Naive thymus-derived CD4-positive, alpha-beta T cell (primary cell): ENCODE measurements at regions of chr9 and their contacts with region 1.

Region 1: GRCh38 chr9:31776471-31776870 is 608.0 kb upstream of the ACO1 start:
- DNase-seq: no peak
- ATAC-seq: no peak
- H3K4me3 ChIP-seq: no peak overlapping the region
- H3K4me3 Mint-ChIP-seq: no peak overlapping the region
- H3K27ac ChIP-seq: no peak overlapping the region
- H3K27ac Mint-ChIP-seq: no peak overlapping the region
- H3K4me1 ChIP-seq: no peaks in the 10 kb centered on the region
- H3K4me1 Mint-ChIP-seq: peaks cover 0 to 4% (median 0%) of the 10 kb centered on the region in 7 donors
- H3K27me3 ChIP-seq: no peaks in the 10 kb centered on the region
- H3K27me3 Mint-ChIP-seq: peaks cover 0 to 12% (median 4%) of the 10 kb centered on the region in 5 donors

Region 2: GRCh38 chr9:31573561-31573960 is 202.9 kb before region 1 on chr9:
- CTCF ChIA-PET with region 1: no interaction called
- POLR2A ChIA-PET with region 1: no interaction called
- intact Hi-C with region 1: no loop called
- DNase-seq: no peak
- ATAC-seq: no peak
- H3K4me3 ChIP-seq: no peak overlapping the region
- H3K4me3 Mint-ChIP-seq: no peak overlapping the region
- H3K27ac ChIP-seq: no peak overlapping the region
- H3K27ac Mint-ChIP-seq: no peak overlapping the region
- H3K4me1 ChIP-seq: no peaks in the 10 kb centered on the region
- H3K4me1 Mint-ChIP-seq: peaks cover 0 to 7% (median 0%) of the 10 kb centered on the region in 7 donors
- H3K27me3 ChIP-seq: no peaks in the 10 kb centered on the region
- H3K27me3 Mint-ChIP-seq: no peaks in the 10 kb centered on the region

Region 3: DNA sequence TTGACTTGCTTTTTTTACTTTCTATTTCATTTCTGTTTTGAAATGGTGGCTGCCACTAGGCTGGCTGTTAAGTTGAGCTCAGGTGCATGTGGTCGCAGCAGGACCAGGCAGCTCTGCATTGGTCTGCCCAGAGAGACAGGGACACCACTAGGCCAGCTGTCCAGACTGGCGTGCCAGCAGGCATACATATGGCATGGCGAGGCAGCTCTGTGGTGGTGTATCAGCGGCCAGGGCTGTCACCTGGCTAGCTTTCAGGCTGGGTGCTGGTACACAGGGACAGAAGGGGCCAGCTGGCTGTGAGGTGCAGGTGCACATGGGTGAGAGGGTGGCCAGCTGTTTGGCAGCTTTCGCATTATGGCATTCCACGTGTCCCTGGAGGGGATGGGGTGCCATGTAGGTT is 46.1 kb before region 1 on chr9:
- CTCF ChIA-PET with region 1: no interaction called
- POLR2A ChIA-PET with region 1: no interaction called
- intact Hi-C with region 1: loop called in 1 of 2 experiments (anchors 5 kb)
- DNase-seq: no peak
- ATAC-seq: no peak
- H3K4me3 ChIP-seq: no peak overlapping the region
- H3K4me3 Mint-ChIP-seq: no peak overlapping the region
- H3K27ac ChIP-seq: no peak overlapping the region
- H3K27ac Mint-ChIP-seq: no peak overlapping the region
- H3K4me1 ChIP-seq: no peaks in the 10 kb centered on the region
- H3K4me1 Mint-ChIP-seq: no peaks in the 10 kb centered on the region
- H3K27me3 ChIP-seq: no peaks in the 10 kb centered on the region
- H3K27me3 Mint-ChIP-seq: no peaks in the 10 kb centered on the region

Region 4: DNA sequence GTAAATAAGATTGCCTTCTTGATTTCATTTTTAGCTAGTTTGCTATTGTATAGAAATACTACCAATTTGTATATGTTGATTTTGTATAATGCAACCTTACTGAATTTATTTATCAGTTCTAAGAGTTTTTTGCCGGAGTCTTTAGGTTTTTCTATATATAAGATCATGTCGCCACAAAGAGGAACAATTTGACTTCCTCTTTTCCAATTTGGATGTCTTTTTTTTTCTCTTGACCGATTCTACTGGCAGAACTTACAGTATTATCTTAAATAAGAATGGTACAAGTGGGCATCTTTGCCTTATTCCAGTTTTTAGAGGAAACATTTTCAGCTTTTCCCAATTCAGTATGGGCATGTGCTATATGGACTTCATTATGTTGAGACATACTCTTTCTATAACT is 16.8 kb before region 1 on chr9:
- CTCF ChIA-PET with region 1: no interaction called
- POLR2A ChIA-PET with region 1: no interaction called
- intact Hi-C with region 1: no loop called
- DNase-seq: no peak
- ATAC-seq: no peak
- H3K4me3 ChIP-seq: no peak overlapping the region
- H3K4me3 Mint-ChIP-seq: no peak overlapping the region
- H3K27ac ChIP-seq: no peak overlapping the region
- H3K27ac Mint-ChIP-seq: no peak overlapping the region
- H3K4me1 ChIP-seq: no peaks in the 10 kb centered on the region
- H3K4me1 Mint-ChIP-seq: peaks cover 0 to 7% (median 2%) of the 10 kb centered on the region in 7 donors
- H3K27me3 ChIP-seq: no peaks in the 10 kb centered on the region
- H3K27me3 Mint-ChIP-seq: no peaks in the 10 kb centered on the region

Region 5: GRCh38 chr9:31824860-31825259 is 48.4 kb after region 1 on chr9:
- CTCF ChIA-PET with region 1: no interaction called
- POLR2A ChIA-PET with region 1: no interaction called
- intact Hi-C with region 1: loop called in 1 of 2 experiments (anchors 5 kb)
- DNase-seq: no peak
- ATAC-seq: no peak
- H3K4me3 ChIP-seq: no peak overlapping the region
- H3K4me3 Mint-ChIP-seq: no peak overlapping the region
- H3K27ac ChIP-seq: no peak overlapping the region
- H3K27ac Mint-ChIP-seq: no peak overlapping the region
- H3K4me1 ChIP-seq: no peaks in the 10 kb centered on the region
- H3K4me1 Mint-ChIP-seq: no peaks in the 10 kb centered on the region
- H3K27me3 ChIP-seq: no peaks in the 10 kb centered on the region
- H3K27me3 Mint-ChIP-seq: no peaks in the 10 kb centered on the region